Activated naive CD4-positive, alpha-beta T cell treated with anti-CD3 and anti-CD28 coated beads for 36 hours (primary cell): ENCODE measurements at regions of chr7 and their contacts with region 1.

Region 1: DNA sequence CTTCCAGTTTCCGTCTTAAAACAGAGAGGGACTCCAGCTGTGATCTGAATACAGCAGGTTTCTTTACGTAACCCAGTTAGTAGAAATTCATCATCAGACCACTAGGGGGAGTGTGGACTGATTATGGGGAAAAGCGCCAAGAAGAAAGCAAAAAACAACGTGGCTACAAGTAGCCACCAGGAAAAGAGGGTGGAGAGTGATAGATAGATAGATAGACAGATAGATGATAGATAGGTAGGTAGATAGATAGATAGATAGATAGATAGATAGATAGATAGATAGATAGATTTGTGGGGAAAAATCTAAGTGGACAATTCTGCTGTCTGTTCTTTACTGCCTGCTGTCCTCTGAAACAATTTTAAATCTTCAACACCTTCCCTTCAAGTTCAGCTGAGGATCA is 12.7 kb upstream of the AKR1B10 start:
- DNase-seq: peak; percentile 22
- H3K4me3 Mint-ChIP-seq: no peak overlapping the region
- H3K27ac Mint-ChIP-seq: no peak overlapping the region
- H3K4me1 Mint-ChIP-seq: peaks cover 10% of the 10 kb centered on the region
- H3K27me3 Mint-ChIP-seq: peaks cover 10% of the 10 kb centered on the region

Region 2: DNA sequence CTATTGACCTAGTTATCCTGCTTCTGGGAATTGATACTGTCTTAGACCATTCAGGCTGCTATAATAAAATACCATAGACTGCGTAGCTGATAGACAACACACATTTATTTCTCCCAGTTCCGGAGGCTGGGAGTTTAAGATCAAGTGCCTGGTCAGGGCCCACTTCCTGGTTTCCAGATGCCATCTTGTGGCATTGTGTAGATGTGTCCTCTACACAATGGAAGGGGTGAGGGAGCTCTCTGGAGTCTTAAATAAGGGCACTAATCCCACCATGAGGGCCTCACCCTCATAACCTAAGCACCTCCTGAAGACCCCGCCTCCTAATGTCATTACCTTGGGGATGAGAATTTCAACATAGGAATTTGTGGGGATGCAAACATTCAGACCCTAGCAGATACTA is 260.4 kb before region 1 on chr7:
- CTCF ChIA-PET with region 1: no interaction called
- intact Hi-C with region 1: no loop called
- DNase-seq: no peak
- H3K4me3 Mint-ChIP-seq: no peak overlapping the region
- H3K27ac Mint-ChIP-seq: no peak overlapping the region
- H3K4me1 Mint-ChIP-seq: no peaks in the 10 kb centered on the region
- H3K27me3 Mint-ChIP-seq: no peaks in the 10 kb centered on the region

Region 3: GRCh38 chr7:134480736-134481135 is 33.9 kb before region 1 on chr7:
- CTCF ChIA-PET with region 1: interaction called, 11 read pairs
- intact Hi-C with region 1: no loop called
- DNase-seq: no peak
- H3K4me3 Mint-ChIP-seq: no peak overlapping the region
- H3K27ac Mint-ChIP-seq: no peak overlapping the region
- H3K4me1 Mint-ChIP-seq: no peaks in the 10 kb centered on the region
- H3K27me3 Mint-ChIP-seq: peaks cover 3% of the 10 kb centered on the region

Region 4: GRCh38 chr7:134547397-134548054 is 32.9 kb after region 1 on chr7:
- CTCF ChIA-PET with region 1: interaction called, 15 read pairs
- intact Hi-C with region 1: loop called (anchors 1 kb)
- DNase-seq: peak; percentile 82
- H3K4me3 Mint-ChIP-seq: no peak overlapping the region
- H3K27ac Mint-ChIP-seq: no peak overlapping the region
- H3K4me1 Mint-ChIP-seq: peaks cover 3% of the 10 kb centered on the region
- H3K27me3 Mint-ChIP-seq: peaks cover 9% of the 10 kb centered on the region

Region 5: DNA sequence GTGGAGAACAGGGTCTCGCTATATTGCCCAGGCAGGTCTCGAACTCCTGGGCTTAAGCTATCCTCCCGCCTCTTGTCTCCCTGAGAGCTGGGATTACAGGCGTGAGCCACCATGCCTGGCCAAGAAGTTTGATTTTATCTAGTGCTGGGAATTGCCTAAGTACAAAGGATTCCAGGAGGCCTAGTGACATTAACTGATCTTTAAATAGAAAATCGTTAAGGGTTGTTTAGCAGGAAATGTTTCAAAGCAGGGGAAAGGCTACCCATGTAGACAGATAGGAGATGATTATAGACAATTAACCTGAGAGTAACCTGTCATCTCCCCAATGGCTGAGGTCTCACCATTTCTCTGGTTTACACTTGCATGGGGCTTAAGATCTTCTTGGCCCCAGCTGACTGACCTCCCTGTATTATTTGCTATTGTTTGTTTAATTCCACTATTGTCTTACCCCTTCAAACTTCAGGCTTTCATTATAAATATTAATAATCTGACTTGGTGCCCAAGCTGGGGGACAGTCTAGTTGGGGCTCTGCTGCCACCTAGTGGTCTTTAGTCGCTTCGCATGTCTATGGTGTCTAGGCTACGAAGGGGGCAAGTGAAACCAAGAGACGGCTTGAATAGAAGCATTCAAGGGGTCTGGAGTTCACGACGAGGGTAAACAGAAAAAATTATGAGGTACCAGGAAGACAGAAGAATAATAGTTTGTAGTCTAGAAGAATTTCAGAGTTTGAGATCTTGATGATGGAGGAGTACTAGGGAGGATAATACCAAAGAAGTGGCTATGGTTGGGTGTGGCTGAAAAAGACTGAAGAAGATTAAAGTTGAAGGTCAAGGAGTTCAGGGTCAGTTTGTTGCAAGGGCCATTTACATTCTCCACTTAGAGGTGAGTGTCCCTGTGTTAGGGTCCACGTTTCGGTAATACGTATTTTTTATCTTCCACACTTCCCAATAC is 91.6 kb after region 1 on chr7:
- CTCF ChIA-PET with region 1: interaction called, 28 read pairs
- intact Hi-C with region 1: loop called (anchors 1 kb)
- DNase-seq: peak; percentile 76
- H3K4me3 Mint-ChIP-seq: no peak overlapping the region
- H3K27ac Mint-ChIP-seq: no peak overlapping the region
- H3K4me1 Mint-ChIP-seq: peaks cover 1% of the 10 kb centered on the region
- H3K27me3 Mint-ChIP-seq: peaks cover 3% of the 10 kb centered on the region

Region 6: DNA sequence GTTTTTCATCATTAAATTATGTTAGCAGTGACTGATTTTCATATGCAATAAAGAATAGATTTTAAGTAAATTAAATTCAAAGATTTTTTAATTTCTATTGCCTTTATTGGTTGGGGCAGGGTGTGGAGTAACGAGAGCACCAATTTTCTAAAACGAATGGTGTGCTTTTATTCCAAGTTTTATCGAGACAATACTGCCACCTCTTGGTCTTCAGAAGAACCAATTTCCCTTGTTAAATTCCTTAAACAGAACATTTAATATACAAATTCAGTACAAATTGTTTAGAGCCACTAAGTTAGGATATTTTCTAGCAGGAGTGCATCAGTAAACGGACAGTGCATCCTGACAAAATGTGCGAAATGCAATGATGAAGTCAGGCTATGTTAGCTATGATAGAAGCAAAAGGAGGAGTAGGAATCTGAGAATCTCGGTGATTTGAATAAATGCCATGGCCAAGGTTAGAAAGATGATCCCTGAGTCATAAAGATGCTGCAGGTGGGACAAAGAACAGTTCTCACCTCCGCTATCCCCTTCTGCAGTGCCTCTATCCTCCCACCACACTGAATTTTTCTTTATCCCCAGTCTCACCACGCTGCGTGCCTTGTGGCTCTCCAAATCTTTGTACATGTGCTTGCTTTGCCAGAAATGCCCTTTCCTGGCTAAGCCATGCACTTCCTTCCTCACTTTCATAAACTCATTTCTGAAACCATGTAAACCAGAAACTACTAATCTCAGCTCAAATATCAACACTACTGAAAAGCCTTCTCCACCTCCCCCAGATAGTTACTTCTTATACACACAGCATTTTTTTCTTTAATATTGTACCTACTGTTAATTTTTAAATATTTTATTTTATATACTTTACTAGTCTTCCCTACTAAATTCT is 439.8 kb after region 1 on chr7:
- CTCF ChIA-PET with region 1: no interaction called
- intact Hi-C with region 1: loop called (anchors 2 kb)
- DNase-seq: no peak
- H3K4me3 Mint-ChIP-seq: no peak overlapping the region
- H3K27ac Mint-ChIP-seq: no peak overlapping the region
- H3K4me1 Mint-ChIP-seq: no peaks in the 10 kb centered on the region
- H3K27me3 Mint-ChIP-seq: no peaks in the 10 kb centered on the region